ENCODE measurements at regions of chr7 and their contacts with region 1.

Region 1: DNA sequence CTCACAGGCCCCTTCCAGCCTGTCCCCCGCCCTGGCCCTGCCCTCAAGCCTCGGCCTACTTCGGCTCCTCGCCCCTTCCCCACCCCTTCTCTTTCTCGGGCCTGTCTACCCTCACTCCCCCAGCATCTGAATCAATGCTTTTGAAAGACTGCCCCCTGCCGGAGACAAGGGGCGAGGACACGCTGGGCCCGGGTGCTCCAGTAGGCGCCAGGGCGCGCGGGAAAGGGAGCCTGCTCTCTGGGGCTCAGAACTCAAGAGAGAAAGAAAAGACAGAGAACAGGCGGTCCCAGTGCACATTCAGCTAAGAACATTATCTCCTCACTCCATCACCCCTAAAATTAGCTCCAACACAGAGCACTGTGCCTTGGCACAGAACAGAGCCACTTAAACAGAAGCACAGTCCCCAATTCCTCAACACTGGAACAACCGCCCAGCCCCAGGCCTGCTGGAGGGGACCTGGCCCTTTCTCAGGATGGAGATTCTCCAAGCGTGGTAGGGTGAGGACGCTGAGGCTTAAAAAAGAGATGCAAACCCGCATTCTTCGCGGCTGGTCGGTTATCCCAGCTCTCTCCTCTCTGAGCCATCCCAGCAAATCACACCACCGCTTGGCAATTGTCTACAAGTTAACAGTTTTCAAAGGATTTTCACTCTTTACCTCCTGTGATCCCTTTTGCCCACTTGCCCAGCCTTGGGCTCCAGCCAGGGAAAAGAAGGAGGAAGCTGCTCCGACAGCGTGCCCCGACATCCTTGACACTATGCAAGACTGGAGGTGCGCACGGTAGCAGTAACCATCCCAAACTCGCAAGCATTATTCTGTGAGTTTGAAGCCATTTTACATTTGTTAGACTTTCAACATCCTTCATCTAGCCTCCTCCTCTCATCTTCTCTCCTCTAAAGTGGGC is 2.1 kb downstream of the GIGYF1 start:
- DNase-seq: no peak
- H3K4me3 ChIP-seq: peak overlapping the region; percentile 74
- CTCF ChIP-seq: peak; percentile 88

Region 2: DNA sequence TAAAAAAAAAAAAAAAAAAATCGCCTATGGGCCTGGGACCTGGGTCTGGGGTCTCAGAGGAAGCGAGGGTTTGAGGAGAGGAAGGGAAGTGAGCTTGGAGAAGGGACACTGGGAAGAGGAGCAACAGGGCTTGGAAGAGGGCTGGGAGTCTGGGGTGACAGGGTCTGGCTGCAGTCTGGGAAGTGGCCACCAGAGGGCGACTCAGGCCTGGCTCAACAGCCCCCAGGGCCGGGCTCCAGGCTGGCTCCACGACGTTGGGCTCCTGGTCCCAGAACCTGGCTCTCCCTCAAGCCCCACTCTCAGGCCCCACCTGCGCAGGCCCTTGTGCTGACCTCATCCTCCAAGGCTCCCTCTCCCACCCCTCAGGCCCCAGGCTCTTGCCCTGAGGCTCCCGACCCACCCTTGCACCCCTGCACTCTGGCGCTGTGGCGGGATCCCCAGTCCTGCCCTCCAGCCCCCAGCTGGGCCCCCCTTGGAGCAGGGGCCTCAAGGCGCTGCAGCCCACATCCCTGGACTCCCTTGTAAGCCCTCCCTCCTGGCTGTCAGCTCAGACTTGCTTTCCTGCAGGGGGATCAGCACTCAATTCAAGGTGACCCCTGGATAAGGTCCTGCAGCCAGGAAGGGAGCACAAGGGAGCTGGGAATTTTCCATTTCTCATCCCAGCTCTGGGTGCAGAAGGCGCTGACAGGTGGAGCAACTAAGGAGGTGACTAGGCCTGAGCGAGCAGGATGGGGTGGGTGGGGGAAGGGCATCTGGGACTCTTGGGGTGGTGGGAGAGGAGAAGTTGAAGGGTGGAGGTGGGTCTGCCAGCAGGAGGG is 222.5 kb before region 1 on chr7:
- CTCF ChIA-PET with region 1: interaction called, 15 read pairs
- POLR2A ChIA-PET with region 1: interaction called, 3 read pairs
- DNase-seq: no peak
- H3K4me3 ChIP-seq: no peak overlapping the region
- CTCF ChIP-seq: peak; percentile 98

Region 3: GRCh38 chr7:100563809-100564400 is 128.0 kb before region 1 on chr7:
- CTCF ChIA-PET with region 1: interaction called, 65 read pairs
- POLR2A ChIA-PET with region 1: no interaction called
- DNase-seq: no peak
- H3K4me3 ChIP-seq: no peak overlapping the region
- CTCF ChIP-seq: peak; percentile 92

Region 4: GRCh38 chr7:100604028-100604975 is 87.6 kb before region 1 on chr7:
- CTCF ChIA-PET with region 1: interaction called, 33 read pairs
- POLR2A ChIA-PET with region 1: no interaction called
- DNase-seq: no peak
- H3K4me3 ChIP-seq: peak overlapping the region; percentile 98
- CTCF ChIP-seq: peak; percentile 48

Region 5: GRCh38 chr7:100675581-100676350 is 16.2 kb before region 1 on chr7:
- CTCF ChIA-PET with region 1: interaction called, 180 read pairs
- POLR2A ChIA-PET with region 1: interaction called, 13 read pairs
- DNase-seq: no peak
- H3K4me3 ChIP-seq: peak overlapping the region; percentile 81
- CTCF ChIP-seq: no peak

Region 6: DNA sequence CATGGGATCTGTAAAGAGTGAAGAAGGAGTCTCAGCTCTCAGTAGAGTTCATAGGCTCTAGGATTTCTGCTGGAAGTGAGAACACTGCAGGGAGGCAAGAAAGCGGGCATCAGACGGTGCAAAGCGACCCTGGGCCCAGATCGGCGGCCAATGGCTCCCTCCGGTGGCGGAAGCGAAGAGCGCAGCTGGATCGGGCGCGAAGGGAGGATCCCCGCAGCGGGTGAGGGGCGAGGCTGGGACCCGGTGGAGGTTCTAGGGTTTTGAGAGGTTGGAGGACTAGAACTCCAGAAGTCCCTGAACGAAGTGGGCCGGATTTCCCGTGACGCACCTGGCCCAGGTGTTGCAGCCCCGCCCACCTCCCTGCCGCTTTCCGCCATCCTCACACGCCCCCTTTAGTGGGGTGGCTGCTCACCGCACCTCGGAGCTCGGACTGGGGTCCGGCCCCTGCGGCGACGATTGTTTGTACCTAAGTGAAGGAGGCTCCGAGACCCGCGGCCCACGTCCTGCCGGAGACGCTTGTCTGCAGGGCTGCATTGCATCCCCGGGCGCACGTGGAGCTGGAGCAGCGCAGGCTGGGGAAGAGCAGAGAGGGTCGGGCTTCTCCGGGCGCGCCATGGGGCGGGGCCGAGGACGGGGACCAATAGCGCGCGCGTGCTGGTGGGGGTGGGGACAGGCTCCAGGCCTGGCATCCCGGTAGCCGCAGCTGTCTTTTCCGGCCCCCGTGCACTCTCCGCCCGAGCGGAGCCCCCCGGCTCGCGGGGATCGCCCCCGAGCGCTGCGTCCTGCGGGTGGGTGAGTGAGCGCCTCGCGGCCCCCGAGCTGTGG is 160.3 kb after region 1 on chr7 and contains the start of gene SLC12A9:
- CTCF ChIA-PET with region 1: interaction called, 76 read pairs
- POLR2A ChIA-PET with region 1: no interaction called
- DNase-seq: peak; percentile 33
- H3K4me3 ChIP-seq: peak within 1 kb of the TSS; percentile 76
- CTCF ChIP-seq: peak; percentile 97

Measured in AG04449 (cell line).